Endothelial cell of umbilical vein (primary cell): ENCODE measurements at regions of chr2 and their contacts with region 1.

Region 1: GRCh38 chr2:42859006-42859552 is 66.7 kb upstream of the HAAO start:
- DNase-seq: peak; percentile 90
- H3K4me3 ChIP-seq: no peak overlapping the region
- H3K27ac ChIP-seq: no peak overlapping the region
- H3K4me1 ChIP-seq: peaks cover 19% of the 10 kb centered on the region
- H3K27me3 ChIP-seq: no peaks in the 10 kb centered on the region
- CTCF ChIP-seq: peak; percentile 75 to 78
- POLR2A ChIP-seq: no peak

Region 2: DNA sequence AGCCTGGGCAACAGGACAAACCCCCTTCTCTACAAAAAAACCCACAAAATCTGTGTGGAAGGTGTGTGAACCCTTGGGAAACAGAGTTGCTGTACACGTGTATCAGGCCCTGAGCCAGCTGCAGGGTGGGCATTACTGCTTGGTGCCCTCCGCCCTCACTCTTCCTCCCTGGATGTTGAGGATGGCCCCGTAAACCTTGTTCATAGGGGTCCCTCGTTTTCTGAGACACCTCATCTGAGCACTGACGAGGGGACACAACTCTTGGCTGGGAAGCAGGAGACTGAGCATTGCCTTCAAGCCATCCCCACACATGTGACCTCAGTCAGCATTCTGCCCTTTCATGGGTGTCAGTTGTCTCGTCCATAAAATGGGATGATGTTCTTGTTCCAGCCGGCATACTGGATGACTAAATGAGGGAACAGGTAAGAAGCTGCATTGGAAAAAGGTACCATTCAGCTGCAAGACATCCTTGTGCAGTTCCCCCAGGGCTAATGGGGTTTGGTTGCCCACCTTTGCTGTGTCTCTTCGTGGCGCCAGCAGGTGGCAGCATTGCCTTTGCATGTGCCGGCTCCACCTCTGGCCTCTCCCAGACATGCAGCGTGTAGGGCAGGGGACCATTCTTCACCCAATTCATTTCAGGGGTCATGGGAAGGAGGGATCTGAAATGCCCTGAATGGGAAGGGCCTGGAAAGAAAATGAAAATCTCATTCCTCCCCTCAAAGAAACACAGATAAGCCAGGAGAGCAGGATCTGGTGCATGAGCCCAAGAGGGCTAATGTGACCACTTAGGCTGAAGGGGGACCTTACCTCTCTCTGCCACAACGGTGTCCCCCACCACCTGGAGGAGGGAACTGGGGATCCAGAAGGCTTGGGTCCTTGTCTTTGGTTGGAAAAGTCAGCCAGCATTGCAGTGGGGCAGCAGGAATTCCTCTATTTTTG is 30.3 kb before region 1 on chr2:
- CTCF ChIA-PET with region 1: interaction called, 8 read pairs
- POLR2A ChIA-PET with region 1: no interaction called
- dilution Hi-C with region 1: no loop called
- intact Hi-C with region 1: loop called (anchors 1 kb)
- DNase-seq: peak; percentile 66
- H3K4me3 ChIP-seq: no peak overlapping the region
- H3K27ac ChIP-seq: no peak overlapping the region
- H3K4me1 ChIP-seq: no peaks in the 10 kb centered on the region
- H3K27me3 ChIP-seq: no peaks in the 10 kb centered on the region
- CTCF ChIP-seq: peak; percentile 91 to 93
- POLR2A ChIP-seq: no peak

Region 3: GRCh38 chr2:42878581-42878980 is 19.5 kb after region 1 on chr2:
- CTCF ChIA-PET with region 1: interaction called, 20 read pairs
- POLR2A ChIA-PET with region 1: no interaction called
- dilution Hi-C with region 1: no loop called
- intact Hi-C with region 1: loop called (anchors 1 kb)
- DNase-seq: peak; percentile 16
- H3K4me3 ChIP-seq: no peak overlapping the region
- H3K27ac ChIP-seq: peak overlapping the region; percentile 72
- H3K4me1 ChIP-seq: peaks cover 51% of the 10 kb centered on the region
- H3K27me3 ChIP-seq: no peaks in the 10 kb centered on the region
- CTCF ChIP-seq: no peak
- POLR2A ChIP-seq: no peak

Region 4: GRCh38 chr2:42906557-42907411 is 47.7 kb after region 1 on chr2:
- CTCF ChIA-PET with region 1: interaction called, 7 read pairs
- POLR2A ChIA-PET with region 1: no interaction called
- dilution Hi-C with region 1: no loop called
- intact Hi-C with region 1: loop called (anchors 1 kb)
- DNase-seq: peak; percentile 62
- H3K4me3 ChIP-seq: no peak overlapping the region
- H3K27ac ChIP-seq: peak overlapping the region; percentile 4
- H3K4me1 ChIP-seq: peaks cover 17% of the 10 kb centered on the region
- H3K27me3 ChIP-seq: no peaks in the 10 kb centered on the region
- CTCF ChIP-seq: no peak
- POLR2A ChIP-seq: no peak

Region 5: DNA sequence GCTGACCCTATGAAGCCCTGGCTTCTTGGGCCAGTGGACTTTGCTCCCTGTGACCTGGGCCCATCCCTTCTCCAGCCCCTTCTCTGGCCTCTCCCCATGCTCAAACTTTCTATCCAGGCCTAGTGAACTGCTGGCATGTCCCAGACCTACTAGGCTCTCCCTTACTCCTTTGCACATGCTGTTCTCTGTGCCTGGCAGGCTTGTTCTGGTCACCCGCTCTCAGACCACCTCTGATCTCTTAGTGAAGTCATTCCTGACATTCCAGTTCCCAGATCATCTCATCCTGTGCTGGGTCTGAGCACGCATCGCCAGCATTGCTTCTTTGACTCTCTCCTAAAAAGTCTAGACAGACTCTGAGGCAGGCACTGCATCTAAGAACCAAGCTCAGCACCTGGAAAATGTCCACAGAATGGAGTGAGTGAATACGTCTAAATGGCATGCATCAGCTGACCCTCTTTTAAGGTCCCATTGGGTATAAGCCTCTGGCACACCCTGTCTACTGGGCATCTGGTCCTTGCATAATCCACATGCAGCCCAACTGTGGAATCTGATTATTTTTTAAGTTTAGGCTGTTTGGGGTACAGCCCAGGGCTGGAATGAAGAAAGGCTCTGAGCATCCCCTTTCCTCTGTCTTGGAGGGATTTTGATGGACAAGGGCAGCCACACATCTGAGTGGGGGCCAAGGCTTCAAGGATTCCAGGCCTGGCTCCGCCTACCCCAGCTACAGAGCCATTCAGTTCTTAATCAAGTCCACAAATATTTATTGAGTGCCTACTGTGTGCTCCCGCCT is 63.9 kb after region 1 on chr2:
- CTCF ChIA-PET with region 1: interaction called, 9 read pairs
- POLR2A ChIA-PET with region 1: no interaction called
- dilution Hi-C with region 1: no loop called
- intact Hi-C with region 1: loop called (anchors 1 kb)
- DNase-seq: no peak
- H3K4me3 ChIP-seq: no peak overlapping the region
- H3K27ac ChIP-seq: peak overlapping the region; percentile 91
- H3K4me1 ChIP-seq: peaks cover 52% of the 10 kb centered on the region
- H3K27me3 ChIP-seq: no peaks in the 10 kb centered on the region
- CTCF ChIP-seq: no peak
- POLR2A ChIP-seq: no peak

Region 6: GRCh38 chr2:42928692-42929545 is 69.8 kb after region 1 on chr2:
- CTCF ChIA-PET with region 1: interaction called, 9 read pairs
- POLR2A ChIA-PET with region 1: no interaction called
- dilution Hi-C with region 1: no loop called
- intact Hi-C with region 1: loop called (anchors 1 kb)
- DNase-seq: peak; percentile 62
- H3K4me3 ChIP-seq: no peak overlapping the region
- H3K27ac ChIP-seq: peak overlapping the region; percentile 49
- H3K4me1 ChIP-seq: peaks cover 51% of the 10 kb centered on the region
- H3K27me3 ChIP-seq: no peaks in the 10 kb centered on the region
- CTCF ChIP-seq: peak; percentile 31 to 49
- POLR2A ChIP-seq: no peak

Region 7: DNA sequence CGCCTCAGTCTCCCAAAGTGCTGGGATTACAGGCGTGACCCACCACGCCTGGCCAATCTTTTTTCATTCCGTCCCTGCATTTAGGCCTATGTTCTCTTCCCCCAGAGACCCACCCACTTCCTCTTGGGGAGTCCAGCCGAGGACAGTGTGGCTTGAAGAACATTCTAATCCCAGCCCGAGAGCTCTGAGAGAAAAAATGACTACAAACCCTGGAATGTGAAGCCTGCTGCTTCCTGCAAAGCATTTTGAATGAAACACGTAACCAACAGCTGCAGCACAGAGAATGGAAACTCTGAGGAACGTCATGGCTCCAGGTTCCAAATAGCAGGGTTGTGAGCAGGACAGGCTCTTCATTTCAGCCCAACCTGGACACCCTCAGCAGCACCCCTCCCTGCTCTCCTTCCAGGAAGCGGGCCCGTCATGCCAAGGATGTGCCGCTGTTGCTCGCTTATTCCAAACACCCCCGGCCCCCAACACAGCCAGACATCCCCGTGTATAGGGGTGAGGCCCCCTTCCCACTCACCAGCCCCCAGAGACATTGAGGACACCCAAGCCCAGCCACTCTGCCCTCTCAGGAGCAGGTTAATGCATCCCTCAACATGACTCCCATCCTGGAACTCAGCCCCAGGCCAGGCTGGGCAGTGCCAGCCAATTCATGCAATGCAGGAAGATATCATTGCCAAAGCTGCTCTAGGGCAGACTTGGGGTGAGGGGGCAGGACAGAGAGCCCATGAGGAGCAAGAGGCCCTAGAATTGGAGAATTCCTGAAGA is 227.6 kb after region 1 on chr2:
- CTCF ChIA-PET with region 1: no interaction called
- POLR2A ChIA-PET with region 1: no interaction called
- dilution Hi-C with region 1: no loop called
- intact Hi-C with region 1: no loop called
- DNase-seq: peak; percentile 96
- H3K4me3 ChIP-seq: no peak overlapping the region
- H3K27ac ChIP-seq: peak overlapping the region; percentile 87
- H3K4me1 ChIP-seq: peaks cover 44% of the 10 kb centered on the region
- H3K27me3 ChIP-seq: no peaks in the 10 kb centered on the region
- CTCF ChIP-seq: no peak
- POLR2A ChIP-seq: peak; percentile 17